Activated T-helper 2 cell treated with anti-CD3 and anti-CD28 coated beads, Interferon-gamma antibody, Interleukin-2, Interleukin-4, amounts not matched to agents 10 μg/mL and 5 μg/mL and 100 μg/mL, durations not matched to agents 14 hours and 24 hours and 36 hours (primary cell): ENCODE measurements at regions of chr5 and their contacts with region 1.

Region 1: GRCh38 chr5:95846554-95847260 is 24.2 kb upstream of the GLRX start:
- DNase-seq: peak; percentile 47
- H3K4me3 Mint-ChIP-seq: no peak overlapping the region
- H3K27ac Mint-ChIP-seq: no peak overlapping the region
- H3K4me1 Mint-ChIP-seq: peaks cover 26% of the 10 kb centered on the region
- H3K27me3 Mint-ChIP-seq: peaks cover 6% of the 10 kb centered on the region

Region 2: GRCh38 chr5:95664204-95664786 is 182.4 kb before region 1 on chr5:
- intact Hi-C with region 1: loop called (anchors 1 kb)
- DNase-seq: no peak
- H3K4me3 Mint-ChIP-seq: no peak overlapping the region
- H3K27ac Mint-ChIP-seq: no peak overlapping the region
- H3K4me1 Mint-ChIP-seq: peaks cover 3% of the 10 kb centered on the region
- H3K27me3 Mint-ChIP-seq: peaks cover 16% of the 10 kb centered on the region

Region 3: DNA sequence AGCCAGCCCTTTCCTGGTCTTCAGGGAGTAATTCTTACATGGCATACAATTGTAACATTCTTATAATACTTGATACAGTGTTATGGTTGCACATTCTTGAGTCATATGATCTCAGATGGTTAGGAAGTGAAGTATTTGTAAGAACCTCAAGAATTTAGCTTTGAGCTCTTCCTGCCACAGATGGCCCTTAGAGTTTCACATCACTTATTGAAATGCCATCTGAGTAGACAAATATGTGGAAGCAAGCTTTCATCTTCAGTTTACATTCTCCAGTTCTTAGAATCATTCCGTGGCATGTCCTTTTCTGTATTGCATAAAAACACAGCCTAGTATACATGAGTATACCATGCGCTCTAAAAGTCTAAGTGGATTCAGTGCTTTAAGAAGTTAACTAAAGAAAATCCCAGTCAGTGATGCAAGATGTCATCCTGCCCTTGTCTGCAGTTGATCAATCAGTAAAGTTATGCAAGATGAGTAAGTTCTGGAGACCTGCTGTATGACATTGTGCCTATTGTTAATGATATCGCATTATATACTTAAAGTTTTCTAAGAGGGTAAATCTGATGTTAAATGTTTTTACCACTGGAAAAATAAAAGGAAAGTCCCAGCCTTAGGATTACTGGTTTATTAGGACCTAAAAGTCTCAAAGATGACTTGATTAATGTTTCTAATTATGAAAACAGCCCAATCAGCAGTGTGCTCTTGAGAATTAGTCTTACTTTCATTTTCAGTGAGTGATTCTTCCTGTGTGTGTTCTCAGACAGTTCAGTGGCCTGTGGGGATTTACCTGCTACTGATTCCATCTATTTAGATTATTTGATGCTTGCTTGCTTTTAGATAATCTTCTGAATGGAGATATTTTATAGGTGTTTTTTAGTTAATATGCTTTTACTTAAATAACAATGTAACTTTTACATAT is 86.2 kb before region 1 on chr5:
- intact Hi-C with region 1: loop called (anchors 2 kb)
- DNase-seq: no peak
- H3K4me3 Mint-ChIP-seq: peak overlapping the region; percentile 51
- H3K27ac Mint-ChIP-seq: peak overlapping the region; percentile 58
- H3K4me1 Mint-ChIP-seq: peaks cover 28% of the 10 kb centered on the region
- H3K27me3 Mint-ChIP-seq: peaks cover 58% of the 10 kb centered on the region

Region 4: GRCh38 chr5:95808686-95809413 is 37.9 kb before region 1 on chr5:
- intact Hi-C with region 1: loop called (anchors 5 kb)
- DNase-seq: peak; percentile 74
- H3K4me3 Mint-ChIP-seq: peak overlapping the region; percentile 5
- H3K27ac Mint-ChIP-seq: peak overlapping the region; percentile 60
- H3K4me1 Mint-ChIP-seq: peaks cover 49% of the 10 kb centered on the region
- H3K27me3 Mint-ChIP-seq: no peaks in the 10 kb centered on the region

Region 5: GRCh38 chr5:95835682-95836385 is 10.9 kb before region 1 on chr5:
- intact Hi-C with region 1: loop called (anchors 1 kb)
- DNase-seq: no peak
- H3K4me3 Mint-ChIP-seq: peak overlapping the region; percentile 72
- H3K27ac Mint-ChIP-seq: peak overlapping the region; percentile 43
- H3K4me1 Mint-ChIP-seq: peaks cover 39% of the 10 kb centered on the region
- H3K27me3 Mint-ChIP-seq: no peaks in the 10 kb centered on the region